Endothelial cell of umbilical vein (primary cell): ENCODE measurements at regions of chr5 and their contacts with region 1.

Region 1: DNA sequence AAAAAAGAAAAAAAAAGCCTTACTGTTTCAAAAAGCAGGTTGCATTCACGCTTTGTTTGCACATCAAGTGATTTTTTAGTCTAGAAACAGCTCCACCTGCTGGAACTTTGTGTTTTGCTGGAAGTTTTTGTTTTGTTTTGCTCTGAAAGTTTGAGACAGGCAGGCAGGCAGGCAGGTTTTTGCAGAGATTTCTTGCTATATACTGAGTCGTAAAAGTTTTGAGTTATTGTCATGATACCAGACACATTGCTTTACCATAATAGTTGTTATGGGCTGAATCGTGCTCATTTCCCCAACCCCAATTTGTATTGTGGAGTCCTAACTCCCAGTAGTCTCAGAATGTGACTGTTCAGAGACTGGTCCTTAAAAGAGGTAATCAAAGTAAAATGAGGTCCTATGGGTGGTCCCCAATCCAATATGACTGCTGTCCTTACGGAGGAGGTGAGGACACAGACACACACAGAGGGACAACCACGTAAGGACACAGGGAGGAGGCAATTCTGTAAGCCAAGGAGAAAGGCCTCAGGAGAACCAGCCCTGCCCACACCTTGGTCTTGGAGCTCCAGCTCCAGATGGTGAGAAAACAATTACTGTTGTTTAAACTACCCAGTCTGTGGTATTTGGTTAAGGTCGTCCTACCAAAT is 20.9 kb downstream of the OR2Y1 start:
- DNase-seq: peak; percentile 46
- H3K4me3 ChIP-seq: no peak overlapping the region
- H3K27ac ChIP-seq: no peak overlapping the region
- H3K4me1 ChIP-seq: no peaks in the 10 kb centered on the region
- H3K27me3 ChIP-seq: no peaks in the 10 kb centered on the region
- CTCF ChIP-seq: peak; percentile 51 to 58
- POLR2A ChIP-seq: no peak

Region 2: GRCh38 chr5:180201051-180201987 is 517.6 kb before region 1 on chr5:
- CTCF ChIA-PET with region 1: no interaction called
- POLR2A ChIA-PET with region 1: no interaction called
- dilution Hi-C with region 1: no loop called
- intact Hi-C with region 1: loop called (anchors 5 kb)
- DNase-seq: peak; percentile 40
- H3K4me3 ChIP-seq: no peak overlapping the region
- H3K27ac ChIP-seq: no peak overlapping the region
- H3K4me1 ChIP-seq: no peaks in the 10 kb centered on the region
- H3K27me3 ChIP-seq: no peaks in the 10 kb centered on the region
- CTCF ChIP-seq: peak; percentile 26 to 35
- POLR2A ChIP-seq: no peak

Region 3: GRCh38 chr5:180586870-180587269 is 132.1 kb before region 1 on chr5:
- CTCF ChIA-PET with region 1: no interaction called
- POLR2A ChIA-PET with region 1: no interaction called
- dilution Hi-C with region 1: no loop called
- intact Hi-C with region 1: no loop called
- DNase-seq: no peak
- H3K4me3 ChIP-seq: no peak overlapping the region
- H3K27ac ChIP-seq: no peak overlapping the region
- H3K4me1 ChIP-seq: no peaks in the 10 kb centered on the region
- H3K27me3 ChIP-seq: peaks cover 15 to 28% of the 10 kb centered on the region in 2 experiments
- CTCF ChIP-seq: no peak
- POLR2A ChIP-seq: no peak

Region 4: GRCh38 chr5:180605554-180606214 is 113.2 kb before region 1 on chr5:
- CTCF ChIA-PET with region 1: interaction called, 10 read pairs
- POLR2A ChIA-PET with region 1: no interaction called
- dilution Hi-C with region 1: no loop called
- intact Hi-C with region 1: no loop called
- DNase-seq: peak; percentile 59
- H3K4me3 ChIP-seq: no peak overlapping the region
- H3K27ac ChIP-seq: no peak overlapping the region
- H3K4me1 ChIP-seq: peaks cover 3% of the 10 kb centered on the region
- H3K27me3 ChIP-seq: no peaks in the 10 kb centered on the region
- CTCF ChIP-seq: peak; percentile 80 to 83
- POLR2A ChIP-seq: no peak

Region 5: GRCh38 chr5:180704368-180704869 is 14.5 kb before region 1 on chr5:
- CTCF ChIA-PET with region 1: interaction called, 18 read pairs
- POLR2A ChIA-PET with region 1: no interaction called
- dilution Hi-C with region 1: no loop called
- intact Hi-C with region 1: no loop called
- DNase-seq: no peak
- H3K4me3 ChIP-seq: no peak overlapping the region
- H3K27ac ChIP-seq: no peak overlapping the region
- H3K4me1 ChIP-seq: no peaks in the 10 kb centered on the region
- H3K27me3 ChIP-seq: no peaks in the 10 kb centered on the region
- CTCF ChIP-seq: no peak
- POLR2A ChIP-seq: no peak

Region 6: GRCh38 chr5:180736536-180736935 is 17.6 kb after region 1 on chr5:
- CTCF ChIA-PET with region 1: interaction called, 14 read pairs
- POLR2A ChIA-PET with region 1: no interaction called
- dilution Hi-C with region 1: no loop called
- intact Hi-C with region 1: no loop called
- DNase-seq: no peak
- H3K4me3 ChIP-seq: no peak overlapping the region
- H3K27ac ChIP-seq: no peak overlapping the region
- H3K4me1 ChIP-seq: no peaks in the 10 kb centered on the region
- H3K27me3 ChIP-seq: no peaks in the 10 kb centered on the region
- CTCF ChIP-seq: no peak
- POLR2A ChIP-seq: no peak

Region 7: GRCh38 chr5:180810210-180810958 is 91.5 kb after region 1 on chr5:
- CTCF ChIA-PET with region 1: no interaction called
- POLR2A ChIA-PET with region 1: no interaction called
- dilution Hi-C with region 1: no loop called
- intact Hi-C with region 1: no loop called
- DNase-seq: peak; percentile 95
- H3K4me3 ChIP-seq: peak overlapping the region; percentile 43 to 72 (median 60)
- H3K27ac ChIP-seq: peak overlapping the region; percentile 88
- H3K4me1 ChIP-seq: peaks cover 38% of the 10 kb centered on the region
- H3K27me3 ChIP-seq: no peaks in the 10 kb centered on the region
- CTCF ChIP-seq: no peak
- POLR2A ChIP-seq: peak; percentile 56

Region 8: GRCh38 chr5:180825768-180826525 is 107.0 kb after region 1 on chr5:
- CTCF ChIA-PET with region 1: no interaction called
- POLR2A ChIA-PET with region 1: no interaction called
- dilution Hi-C with region 1: no loop called
- intact Hi-C with region 1: no loop called
- DNase-seq: peak; percentile 70
- H3K4me3 ChIP-seq: no peak overlapping the region
- H3K27ac ChIP-seq: no peak overlapping the region
- H3K4me1 ChIP-seq: peaks cover 14% of the 10 kb centered on the region
- H3K27me3 ChIP-seq: no peaks in the 10 kb centered on the region
- CTCF ChIP-seq: no peak
- POLR2A ChIP-seq: no peak